ENCODE measurements at regions of chr14 and their contacts with region 1.

Region 1: GRCh38 chr14:102316743-102317563 is 2.6 kb upstream of the ZNF839 start:
- DNase-seq: peak; percentile 83
- ATAC-seq: peak; percentile 52
- H3K4me3 ChIP-seq: peak overlapping the region; percentile 77 to 97 (median 86)
- H3K27ac ChIP-seq: peak overlapping the region; percentile 80
- H3K4me1 ChIP-seq: peaks cover 55% of the 10 kb centered on the region
- H3K27me3 ChIP-seq: no peaks in the 10 kb centered on the region; a peak in 1 of 5 replicates
- CTCF ChIP-seq: peak; percentile 93
- EP300 ChIP-seq: peak; percentile 18 to 54; a peak in 2 of 4 replicates
- POLR2A ChIP-seq: peak in 1 of 2 experiments; percentile 25; a peak in 2 of 4 replicates
- RAD21 ChIP-seq: 0 out of 2 replicates have a peak, but pooled peaks have one; percentile 26

Region 2: DNA sequence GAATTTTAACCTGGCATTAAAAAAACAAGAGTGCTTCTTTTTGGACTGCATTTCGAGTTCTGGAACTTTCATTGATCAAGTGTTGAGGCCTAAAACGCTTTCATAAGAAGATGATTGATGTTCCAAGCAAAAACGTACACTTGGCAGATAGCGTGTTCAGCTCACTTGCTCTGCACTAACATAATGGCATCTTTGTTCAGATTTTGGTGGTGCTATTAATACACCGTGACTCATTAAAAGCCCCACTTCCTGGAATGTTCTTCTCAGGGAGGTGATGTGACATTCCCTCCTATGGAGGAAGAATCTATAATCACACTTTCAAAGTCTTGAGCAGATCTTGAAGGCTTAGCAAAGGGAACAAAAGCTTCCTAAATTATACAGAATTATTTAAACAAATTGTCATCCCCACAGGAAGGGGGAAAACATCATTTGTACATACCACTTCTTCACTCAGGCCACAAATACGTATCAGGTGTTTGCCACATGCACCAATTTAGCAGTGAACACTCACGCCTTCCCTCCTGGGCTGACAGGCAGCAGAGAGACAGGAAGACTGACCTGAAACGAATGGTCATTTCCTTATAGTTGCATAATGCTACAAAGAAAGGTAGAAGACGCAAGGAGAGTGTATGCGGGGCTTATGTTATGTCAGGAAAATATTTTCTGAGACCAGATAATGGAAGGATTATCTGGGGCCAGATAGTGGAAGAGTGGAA is 245.5 kb before region 1 on chr14:
- CTCF ChIA-PET with region 1: no interaction called
- POLR2A ChIA-PET with region 1: no interaction called
- in situ Hi-C with region 1: loop called (anchors 10 kb)
- intact Hi-C with region 1: no loop called
- DNase-seq: peak; percentile 56
- ATAC-seq: no peak
- H3K4me3 ChIP-seq: no peak overlapping the region
- H3K27ac ChIP-seq: no peak overlapping the region
- H3K4me1 ChIP-seq: peaks cover 13% of the 10 kb centered on the region; the same call in 1 of the 2 replicates
- H3K27me3 ChIP-seq: no peaks in the 10 kb centered on the region
- CTCF ChIP-seq: no peak
- EP300 ChIP-seq: no peak
- POLR2A ChIP-seq: no peak
- RAD21 ChIP-seq: no peak

Region 3: DNA sequence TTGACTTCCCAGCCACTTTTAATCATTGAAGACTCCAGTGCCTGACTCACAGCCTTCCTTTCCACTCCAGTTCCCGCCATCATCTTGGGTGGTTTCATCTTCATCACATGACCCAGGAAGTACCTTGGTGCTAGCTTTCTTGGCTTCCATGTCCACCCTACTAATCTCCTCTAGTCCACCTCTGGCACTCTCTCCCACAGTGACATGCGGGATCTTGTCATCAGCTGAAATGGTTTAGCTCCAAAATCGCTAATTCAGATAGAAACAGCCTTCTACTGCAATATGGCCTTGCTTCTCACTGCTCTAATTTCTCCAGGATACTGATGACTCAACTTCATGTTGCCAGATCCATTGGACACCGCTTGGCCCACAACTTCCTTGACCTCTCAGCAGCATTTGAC is 152.7 kb before region 1 on chr14:
- CTCF ChIA-PET with region 1: no interaction called
- POLR2A ChIA-PET with region 1: no interaction called
- in situ Hi-C with region 1: no loop called
- intact Hi-C with region 1: no loop called
- DNase-seq: no peak
- ATAC-seq: no peak
- H3K4me3 ChIP-seq: no peak overlapping the region
- H3K27ac ChIP-seq: no peak overlapping the region
- H3K4me1 ChIP-seq: peaks cover 28% of the 10 kb centered on the region
- H3K27me3 ChIP-seq: no peaks in the 10 kb centered on the region
- CTCF ChIP-seq: no peak
- EP300 ChIP-seq: no peak
- POLR2A ChIP-seq: no peak
- RAD21 ChIP-seq: no peak

Region 4: GRCh38 chr14:102235275-102235897 is 81.6 kb before region 1 on chr14:
- CTCF ChIA-PET with region 1: interaction called, 44 read pairs
- POLR2A ChIA-PET with region 1: no interaction called
- in situ Hi-C with region 1: loop called (anchors 5 kb)
- intact Hi-C with region 1: loop called (anchors 1 kb)
- DNase-seq: peak; percentile 70
- ATAC-seq: peak; percentile 97
- H3K4me3 ChIP-seq: peak overlapping the region; percentile 38 to 69 (median 62); a peak in 5 of 6 replicates
- H3K27ac ChIP-seq: no peak overlapping the region
- H3K4me1 ChIP-seq: peaks cover 19% of the 10 kb centered on the region; the same call in 1 of the 2 replicates
- H3K27me3 ChIP-seq: no peaks in the 10 kb centered on the region
- CTCF ChIP-seq: peak; percentile 93
- EP300 ChIP-seq: no peak
- POLR2A ChIP-seq: no peak; a peak in 1 of 4 replicates
- RAD21 ChIP-seq: peak; percentile 84

Region 5: DNA sequence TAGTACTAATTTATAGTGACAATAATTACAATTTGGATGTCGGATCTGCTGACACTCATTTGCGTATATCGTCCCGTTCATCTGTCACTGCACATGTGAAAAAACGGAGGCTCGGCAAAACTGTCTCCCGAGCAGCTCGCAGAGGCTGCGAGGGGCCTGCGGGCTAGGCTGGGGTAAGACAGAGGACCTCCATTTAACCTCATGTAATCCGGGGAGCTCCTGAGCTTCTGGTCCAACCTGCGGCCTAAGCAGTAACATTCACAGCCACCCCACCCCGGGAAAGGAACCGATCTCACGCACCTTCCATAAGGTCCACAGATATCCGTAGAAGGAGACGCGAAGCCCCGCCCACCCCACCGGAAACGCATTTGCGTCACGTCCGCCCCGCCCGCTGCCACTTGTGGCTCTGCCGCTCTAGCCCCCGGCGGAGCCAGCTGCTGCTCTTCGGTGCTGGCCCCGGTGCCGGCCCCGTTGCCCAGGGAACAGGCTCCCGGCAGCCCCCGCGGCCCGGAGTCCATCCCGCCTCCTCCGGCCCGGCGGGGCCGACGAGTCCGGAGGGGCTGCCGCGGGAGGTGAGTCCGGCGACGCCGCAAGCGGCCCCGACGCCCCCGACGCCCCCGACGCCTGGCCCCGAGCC is 45.7 kb after region 1 on chr14 and contains the starts of genes CINP and TECPR2:
- CTCF ChIA-PET with region 1: no interaction called
- POLR2A ChIA-PET with region 1: interaction called, 10 read pairs
- in situ Hi-C with region 1: no loop called
- intact Hi-C with region 1: loop called (anchors 2 kb)
- DNase-seq: peak; percentile 85
- ATAC-seq: peak; percentile 99
- H3K4me3 ChIP-seq: peak within 1 kb of the TSS; percentile 83 to 92 (median 84)
- H3K27ac ChIP-seq: peak within 1 kb of the TSS; percentile 63
- H3K4me1 ChIP-seq: peaks cover 37% of the 10 kb centered on the region
- H3K27me3 ChIP-seq: no peaks in the 10 kb centered on the region; a peak in 1 of 5 replicates
- CTCF ChIP-seq: no peak
- EP300 ChIP-seq: no peak
- POLR2A ChIP-seq: peak; percentile 85 to 86
- RAD21 ChIP-seq: no peak
- total RNA-seq, gene CINP: 42.8 and 59.7 TPM in 2 replicates
- total RNA-seq, gene TECPR2: 5.7 and 13.6 TPM in 2 replicates

Region 6: GRCh38 chr14:102591889-102592763 is 275.2 kb after region 1 on chr14 and contains the start of gene RCOR1:
- CTCF ChIA-PET with region 1: no interaction called
- POLR2A ChIA-PET with region 1: no interaction called
- in situ Hi-C with region 1: no loop called
- intact Hi-C with region 1: loop called (anchors 5 kb)
- DNase-seq: peak; percentile 89
- ATAC-seq: peak; percentile 77
- H3K4me3 ChIP-seq: peak within 1 kb of the TSS; percentile 94 to 97 (median 94)
- H3K27ac ChIP-seq: peak within 1 kb of the TSS; percentile 99
- H3K4me1 ChIP-seq: peaks cover 48% of the 10 kb centered on the region
- H3K27me3 ChIP-seq: no peaks in the 10 kb centered on the region; a peak in 1 of 5 replicates
- CTCF ChIP-seq: no peak
- EP300 ChIP-seq: no peak
- POLR2A ChIP-seq: peak; percentile 85 to 94
- RAD21 ChIP-seq: peak; percentile 58; the same call in 1 of the 2 replicates
- total RNA-seq, gene RCOR1: 11.1 and 14.8 TPM in 2 replicates

Measured in HepG2 (cell line).